Activated CD4-positive, alpha-beta memory T cell treated with anti-CD3 and anti-CD28 coated beads for 36 hours (primary cell): ENCODE measurements at regions of chr7 and their contacts with region 1.

Region 1: GRCh38 chr7:130641497-130641896 is 27.1 kb downstream of the COPG2 start:
- DNase-seq: no peak
- H3K4me3 Mint-ChIP-seq: no peak overlapping the region
- H3K27ac Mint-ChIP-seq: peak overlapping the region; percentile 77
- H3K4me1 Mint-ChIP-seq: peaks cover 21% of the 10 kb centered on the region
- H3K27me3 Mint-ChIP-seq: no peaks in the 10 kb centered on the region

Region 2: GRCh38 chr7:130446259-130446658 is 195.2 kb before region 1 on chr7:
- CTCF ChIA-PET with region 1: no interaction called
- POLR2A ChIA-PET with region 1: no interaction called
- intact Hi-C with region 1: loop called (anchors 1 kb)
- DNase-seq: peak; percentile 20
- H3K4me3 Mint-ChIP-seq: no peak overlapping the region
- H3K27ac Mint-ChIP-seq: peak overlapping the region; percentile 62
- H3K4me1 Mint-ChIP-seq: peaks cover 14% of the 10 kb centered on the region
- H3K27me3 Mint-ChIP-seq: peaks cover 3% of the 10 kb centered on the region

Region 3: GRCh38 chr7:130553398-130554029 is 88.0 kb before region 1 on chr7:
- CTCF ChIA-PET with region 1: no interaction called
- POLR2A ChIA-PET with region 1: no interaction called
- intact Hi-C with region 1: no loop called
- DNase-seq: no peak
- H3K4me3 Mint-ChIP-seq: no peak overlapping the region
- H3K27ac Mint-ChIP-seq: no peak overlapping the region
- H3K4me1 Mint-ChIP-seq: no peaks in the 10 kb centered on the region
- H3K27me3 Mint-ChIP-seq: no peaks in the 10 kb centered on the region